Activated CD4-positive, alpha-beta T cell treated with anti-CD3 and anti-CD28 coated beads for 36 hours (primary cell): ENCODE measurements at regions of chr7 and their contacts with region 1.

Region 1: GRCh38 chr7:101138213-101138870 is 11.4 kb downstream of the SERPINE1 start:
- DNase-seq: peak; percentile 94
- ATAC-seq: peak; percentile 91
- H3K4me3 Mint-ChIP-seq: peak overlapping the region; percentile 43
- H3K27ac Mint-ChIP-seq: no peak overlapping the region
- H3K4me1 Mint-ChIP-seq: peaks cover 58% of the 10 kb centered on the region
- H3K27me3 Mint-ChIP-seq: peaks cover 7% of the 10 kb centered on the region

Region 2: DNA sequence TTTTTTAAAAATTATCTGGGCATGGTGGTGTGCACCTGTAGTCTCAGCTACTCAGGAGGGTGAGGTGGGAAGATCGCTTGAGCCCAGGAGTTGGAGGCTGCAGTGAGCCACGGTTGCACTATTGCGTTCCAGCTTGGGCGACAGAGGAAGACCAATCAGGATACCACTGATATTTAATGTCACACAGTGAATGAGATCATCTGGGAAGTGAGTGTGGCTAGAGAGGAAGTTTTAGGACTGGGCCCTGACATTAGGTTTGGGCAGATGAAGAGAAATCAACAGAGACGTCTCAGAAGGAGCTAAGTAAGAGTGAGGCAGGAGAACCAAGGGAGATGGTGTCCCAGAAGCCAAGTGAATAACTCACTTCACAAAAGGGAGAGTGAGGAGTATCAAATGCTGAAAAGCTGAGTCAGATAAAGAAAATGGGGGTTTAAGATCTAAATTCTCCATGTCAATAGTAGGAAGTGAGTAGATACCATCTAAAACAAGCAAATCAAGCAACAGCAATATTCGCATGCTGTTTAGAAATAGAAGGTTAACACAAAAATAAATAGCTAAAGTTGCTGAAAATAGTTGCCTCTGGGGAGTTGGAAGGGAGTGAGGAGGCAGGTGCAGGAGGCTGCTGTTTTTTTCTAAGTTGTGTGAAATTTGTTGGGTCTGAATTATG is 753.6 kb before region 1 on chr7:
- CTCF ChIA-PET with region 1: no interaction called
- POLR2A ChIA-PET with region 1: no interaction called
- intact Hi-C with region 1: no loop called
- DNase-seq: no peak
- ATAC-seq: no peak
- H3K4me3 Mint-ChIP-seq: no peak overlapping the region
- H3K27ac Mint-ChIP-seq: no peak overlapping the region
- H3K4me1 Mint-ChIP-seq: peaks cover 5% of the 10 kb centered on the region
- H3K27me3 Mint-ChIP-seq: peaks cover 9% of the 10 kb centered on the region

Region 3: DNA sequence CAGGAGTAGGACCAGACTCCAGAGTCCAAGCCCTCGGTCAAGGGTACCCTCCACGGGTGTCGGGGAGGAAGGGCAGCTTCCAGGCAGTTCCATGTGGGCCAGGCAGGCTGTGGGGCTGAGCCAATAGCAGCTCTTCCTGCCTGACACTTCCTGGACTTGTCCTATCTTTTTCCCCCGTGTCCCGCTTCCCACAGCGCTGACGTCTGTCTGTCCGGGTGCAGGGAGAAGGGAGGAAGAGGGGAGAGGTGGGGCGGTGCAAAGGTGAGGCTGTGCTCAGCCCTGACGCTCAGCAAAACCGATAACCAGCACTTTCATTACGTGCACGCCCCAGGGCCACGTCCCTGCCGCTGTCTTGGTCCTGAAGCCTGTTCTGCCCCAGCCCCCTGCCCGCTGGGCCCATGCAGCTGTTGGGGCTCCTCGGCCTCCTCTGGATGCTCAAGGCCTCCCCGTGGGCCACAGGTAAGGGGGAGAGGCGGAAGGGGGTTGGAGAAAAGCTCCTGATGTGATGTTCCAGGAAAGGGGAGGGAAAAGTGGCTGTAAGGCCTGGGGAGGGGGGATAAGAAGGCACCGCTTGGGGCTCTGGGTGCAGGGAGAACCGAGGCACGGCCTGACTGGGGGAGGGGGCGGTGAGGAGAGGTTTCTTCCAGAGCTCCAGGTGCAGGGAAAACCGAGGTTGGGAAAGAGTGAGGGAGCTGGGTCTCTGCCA is 189.0 kb before region 1 on chr7 and contains the start of gene MUC3A:
- CTCF ChIA-PET with region 1: no interaction called
- POLR2A ChIA-PET with region 1: no interaction called
- intact Hi-C with region 1: no loop called
- DNase-seq: no peak
- ATAC-seq: no peak
- H3K4me3 Mint-ChIP-seq: no peak within 1 kb of the TSS
- H3K27ac Mint-ChIP-seq: no peak within 1 kb of the TSS
- H3K4me1 Mint-ChIP-seq: no peaks in the 10 kb centered on the region
- H3K27me3 Mint-ChIP-seq: peaks cover 18% of the 10 kb centered on the region
- total RNA-seq, gene MUC3A: not detected

Region 4: DNA sequence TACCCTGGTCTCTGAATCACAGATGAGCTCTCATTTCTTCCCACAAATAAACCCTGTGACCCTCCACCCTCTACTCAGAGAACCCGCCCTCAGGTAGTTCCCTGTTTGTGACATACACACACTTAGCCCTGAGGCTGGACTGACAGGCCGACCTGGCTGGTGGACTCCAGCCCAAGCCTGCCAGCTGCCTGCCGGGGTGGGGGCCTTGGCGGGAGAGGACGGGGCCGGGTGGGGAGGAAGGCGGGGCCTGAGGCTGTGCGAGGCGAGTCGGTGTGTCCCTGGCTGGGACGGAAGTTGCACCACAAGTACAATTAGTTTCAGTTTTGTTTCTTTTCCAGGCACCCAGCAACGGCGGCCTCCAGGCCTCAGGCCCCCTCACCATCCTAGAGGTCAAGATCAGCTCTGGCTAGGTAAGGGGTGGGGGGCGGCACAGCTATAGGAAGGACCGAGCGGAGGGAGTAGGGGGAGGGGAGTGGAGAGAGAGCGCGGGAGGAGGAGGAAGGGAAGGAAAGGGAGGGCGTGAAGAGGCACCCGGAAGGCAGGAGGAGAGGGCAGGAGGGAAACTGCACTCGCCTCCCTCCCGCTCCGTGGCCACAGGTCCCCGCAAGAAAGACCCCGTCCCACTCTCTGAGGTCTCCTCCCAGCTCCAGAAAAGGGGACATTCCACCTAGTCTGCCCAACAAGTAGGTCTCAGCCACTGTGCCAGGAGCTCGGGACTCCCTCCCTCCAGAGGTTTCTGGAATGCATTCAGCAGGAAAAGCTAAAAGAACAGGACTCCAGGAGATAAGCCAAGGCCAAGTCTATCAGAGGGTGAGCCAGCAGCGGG is 53.0 kb before region 1 on chr7 and contains the start of gene TRIM56:
- CTCF ChIA-PET with region 1: interaction called, 10 read pairs
- POLR2A ChIA-PET with region 1: no interaction called
- intact Hi-C with region 1: loop called (anchors 1 to 2 kb)
- DNase-seq: peak; percentile 88
- ATAC-seq: peak; percentile 90
- H3K4me3 Mint-ChIP-seq: peak within 1 kb of the TSS; percentile 94
- H3K27ac Mint-ChIP-seq: peak within 1 kb of the TSS; percentile 98
- H3K4me1 Mint-ChIP-seq: peaks cover 26% of the 10 kb centered on the region
- H3K27me3 Mint-ChIP-seq: no peaks in the 10 kb centered on the region
- total RNA-seq, gene TRIM56: 35.3 to 40.8 TPM

Region 5: DNA sequence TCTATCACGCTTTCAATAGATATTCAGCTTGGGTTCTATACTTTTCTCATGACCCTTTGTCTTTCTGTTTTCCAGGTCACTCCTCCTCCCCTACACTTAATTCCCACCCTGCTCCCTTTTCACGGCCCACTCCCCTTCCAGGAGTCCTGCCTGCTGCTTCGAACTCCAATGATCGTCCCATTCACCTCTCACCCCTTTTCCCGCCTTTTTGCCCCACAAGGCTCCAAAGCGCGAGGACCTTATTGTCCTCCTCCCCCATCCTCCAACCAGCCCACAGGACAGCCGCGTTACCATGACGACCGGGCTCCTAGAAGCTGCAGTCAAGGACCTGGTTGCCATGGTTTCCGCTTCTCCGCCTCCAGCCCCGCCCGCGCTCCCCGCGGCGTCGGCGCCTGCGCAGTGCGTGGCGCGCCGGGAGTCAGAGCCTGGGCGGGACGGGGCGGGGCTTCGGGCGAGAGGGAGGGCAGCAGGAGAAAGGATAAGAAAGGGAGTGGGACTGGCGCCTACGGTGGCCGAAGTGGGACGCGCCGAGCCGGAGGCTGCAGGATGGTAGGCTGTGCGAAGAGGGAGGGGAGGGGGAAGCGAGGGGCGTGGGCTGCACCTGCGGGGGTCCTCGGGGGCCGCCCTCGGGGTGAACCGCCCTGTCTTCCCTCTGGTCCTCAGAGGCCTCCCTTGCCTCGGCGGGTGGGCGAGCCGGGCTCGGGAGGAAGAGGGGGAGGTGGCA is 15.8 kb after region 1 on chr7 and contains the start of gene AP1S1:
- CTCF ChIA-PET with region 1: interaction called, 26 read pairs
- POLR2A ChIA-PET with region 1: interaction called, 12 read pairs
- intact Hi-C with region 1: loop called in 1 of 2 experiments (anchors 1 kb)
- DNase-seq: peak; percentile 97
- ATAC-seq: peak; percentile 90
- H3K4me3 Mint-ChIP-seq: peak within 1 kb of the TSS; percentile 76
- H3K27ac Mint-ChIP-seq: peak within 1 kb of the TSS; percentile 22
- H3K4me1 Mint-ChIP-seq: peaks cover 12% of the 10 kb centered on the region
- H3K27me3 Mint-ChIP-seq: peaks cover 2% of the 10 kb centered on the region
- total RNA-seq, gene AP1S1: 33.7 to 43.0 TPM

Region 6: DNA sequence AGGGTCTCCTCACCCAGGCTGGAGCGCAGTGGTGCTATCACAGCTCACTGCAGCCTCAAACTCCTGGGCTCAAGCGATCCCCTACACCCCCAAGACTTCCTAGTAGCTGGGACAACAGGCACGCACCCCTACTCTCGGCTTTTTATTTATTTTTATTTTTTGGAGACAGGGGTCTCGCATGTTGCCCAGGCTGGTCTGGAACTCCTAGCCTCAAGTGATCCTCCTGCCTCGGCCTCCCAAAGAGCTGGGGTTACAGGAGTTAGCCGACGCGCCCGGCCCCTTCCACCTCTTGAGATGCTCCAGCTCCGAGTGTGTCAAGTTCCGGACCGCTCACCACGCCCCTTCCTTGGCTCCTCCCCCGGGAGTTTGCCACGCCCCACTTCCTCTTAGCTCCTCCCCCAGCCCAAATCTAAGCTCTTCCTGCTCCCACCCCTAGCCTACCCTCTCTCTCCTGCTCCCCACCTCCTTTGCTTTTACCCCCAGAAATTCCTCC is 35.5 kb after region 1 on chr7:
- CTCF ChIA-PET with region 1: interaction called, 22 read pairs
- POLR2A ChIA-PET with region 1: no interaction called
- intact Hi-C with region 1: no loop called
- DNase-seq: peak; percentile 85
- ATAC-seq: peak; percentile 86
- H3K4me3 Mint-ChIP-seq: peak overlapping the region; percentile 41
- H3K27ac Mint-ChIP-seq: no peak overlapping the region
- H3K4me1 Mint-ChIP-seq: peaks cover 50% of the 10 kb centered on the region
- H3K27me3 Mint-ChIP-seq: peaks cover 78% of the 10 kb centered on the region

Region 7: DNA sequence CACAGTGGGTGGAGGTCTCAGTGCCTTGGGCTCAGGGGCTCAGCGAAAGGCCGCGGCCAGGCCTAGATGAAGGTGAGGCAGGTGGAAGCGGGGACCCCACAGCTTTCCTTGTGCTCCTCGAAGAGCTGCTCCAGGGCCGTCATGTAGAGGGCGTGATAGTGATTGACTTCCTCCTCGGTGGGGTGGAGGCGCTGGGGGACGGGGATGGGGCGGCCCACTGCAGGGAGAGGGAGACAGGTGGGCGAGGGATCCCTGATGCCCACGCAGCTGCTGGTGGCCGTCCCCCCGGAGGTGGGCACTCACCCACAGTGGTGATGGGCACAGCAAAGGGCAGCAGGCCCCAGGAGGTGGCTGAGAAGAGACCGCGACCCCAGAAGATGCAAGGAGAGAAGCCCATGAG is 57.5 kb after region 1 on chr7:
- CTCF ChIA-PET with region 1: interaction called, 132 read pairs
- POLR2A ChIA-PET with region 1: no interaction called
- intact Hi-C with region 1: no loop called
- DNase-seq: no peak
- ATAC-seq: no peak
- H3K4me3 Mint-ChIP-seq: no peak overlapping the region
- H3K27ac Mint-ChIP-seq: no peak overlapping the region
- H3K4me1 Mint-ChIP-seq: peaks cover under 1% of the 10 kb centered on the region
- H3K27me3 Mint-ChIP-seq: peaks cover 10% of the 10 kb centered on the region

Region 8: DNA sequence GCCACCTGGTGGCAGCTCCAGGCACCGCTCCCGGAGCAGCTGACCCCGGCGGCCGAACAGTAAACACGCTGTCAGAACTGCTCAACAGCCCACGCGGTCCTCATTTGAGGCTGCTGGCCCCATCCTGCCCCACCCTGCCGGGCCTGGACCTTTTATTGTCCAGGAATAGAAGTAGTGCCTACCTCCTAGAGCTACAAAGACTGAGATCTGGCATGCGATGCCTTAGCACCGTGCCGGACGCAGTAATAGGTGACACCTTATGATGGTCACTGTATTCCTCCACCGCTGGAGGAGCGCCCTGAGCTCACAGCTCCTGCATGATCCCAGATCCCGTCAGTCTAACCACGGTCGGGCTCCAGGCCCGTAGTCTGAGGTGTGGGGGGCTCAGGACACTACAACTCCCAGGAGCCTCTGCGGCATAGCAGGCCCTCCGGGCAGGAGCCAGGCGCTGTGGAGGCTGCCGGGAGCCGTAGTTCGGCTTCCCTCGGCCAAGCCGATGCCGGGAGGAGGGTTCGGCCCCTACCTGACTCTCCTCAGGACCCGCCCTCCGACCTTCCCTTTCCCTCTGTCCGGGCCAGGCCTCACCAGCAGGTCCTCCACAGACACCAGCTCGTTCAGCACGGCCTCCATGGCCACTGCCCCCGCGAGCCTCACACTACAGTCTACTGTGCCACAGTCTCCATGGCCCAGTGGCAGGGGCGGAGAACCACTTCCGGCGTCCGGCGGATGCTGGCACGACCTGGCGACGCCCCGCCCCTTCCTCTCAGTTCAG is 106.2 kb after region 1 on chr7 and contains the start of gene FIS1:
- CTCF ChIA-PET with region 1: interaction called, 24 read pairs
- POLR2A ChIA-PET with region 1: no interaction called
- intact Hi-C with region 1: no loop called
- DNase-seq: peak; percentile 97
- ATAC-seq: peak; percentile 96
- H3K4me3 Mint-ChIP-seq: peak within 1 kb of the TSS; percentile 97
- H3K27ac Mint-ChIP-seq: peak within 1 kb of the TSS; percentile 97
- H3K4me1 Mint-ChIP-seq: peaks cover 25% of the 10 kb centered on the region
- H3K27me3 Mint-ChIP-seq: no peaks in the 10 kb centered on the region
- total RNA-seq, gene FIS1: 70.5 to 92.6 TPM

Region 9: GRCh38 chr7:101373812-101374614 is 235.7 kb after region 1 on chr7:
- CTCF ChIA-PET with region 1: no interaction called
- POLR2A ChIA-PET with region 1: no interaction called
- intact Hi-C with region 1: no loop called
- DNase-seq: no peak
- ATAC-seq: no peak
- H3K4me3 Mint-ChIP-seq: no peak overlapping the region
- H3K27ac Mint-ChIP-seq: no peak overlapping the region
- H3K4me1 Mint-ChIP-seq: peaks cover 3% of the 10 kb centered on the region
- H3K27me3 Mint-ChIP-seq: peaks cover 12% of the 10 kb centered on the region